AG04450 (cell line): ENCODE measurements at regions of chr10 and their contacts with region 1.

Region 1: GRCh38 chr10:70363971-70364771 is 18.3 kb downstream of the LRRC20 start:
- DNase-seq: peak; percentile 97
- H3K4me3 ChIP-seq: peak overlapping the region; percentile 35
- H3K27ac ChIP-seq: peak overlapping the region; percentile 98
- H3K27me3 ChIP-seq: no peaks in the 10 kb centered on the region
- CTCF ChIP-seq: peak; percentile 94

Region 2: GRCh38 chr10:69968830-69969229 is 395.3 kb before region 1 on chr10:
- CTCF ChIA-PET with region 1: no interaction called
- POLR2A ChIA-PET with region 1: no interaction called
- DNase-seq: no peak
- H3K4me3 ChIP-seq: no peak overlapping the region
- H3K27ac ChIP-seq: no peak overlapping the region
- H3K27me3 ChIP-seq: peaks cover 9% of the 10 kb centered on the region
- CTCF ChIP-seq: peak; percentile 34

Region 3: DNA sequence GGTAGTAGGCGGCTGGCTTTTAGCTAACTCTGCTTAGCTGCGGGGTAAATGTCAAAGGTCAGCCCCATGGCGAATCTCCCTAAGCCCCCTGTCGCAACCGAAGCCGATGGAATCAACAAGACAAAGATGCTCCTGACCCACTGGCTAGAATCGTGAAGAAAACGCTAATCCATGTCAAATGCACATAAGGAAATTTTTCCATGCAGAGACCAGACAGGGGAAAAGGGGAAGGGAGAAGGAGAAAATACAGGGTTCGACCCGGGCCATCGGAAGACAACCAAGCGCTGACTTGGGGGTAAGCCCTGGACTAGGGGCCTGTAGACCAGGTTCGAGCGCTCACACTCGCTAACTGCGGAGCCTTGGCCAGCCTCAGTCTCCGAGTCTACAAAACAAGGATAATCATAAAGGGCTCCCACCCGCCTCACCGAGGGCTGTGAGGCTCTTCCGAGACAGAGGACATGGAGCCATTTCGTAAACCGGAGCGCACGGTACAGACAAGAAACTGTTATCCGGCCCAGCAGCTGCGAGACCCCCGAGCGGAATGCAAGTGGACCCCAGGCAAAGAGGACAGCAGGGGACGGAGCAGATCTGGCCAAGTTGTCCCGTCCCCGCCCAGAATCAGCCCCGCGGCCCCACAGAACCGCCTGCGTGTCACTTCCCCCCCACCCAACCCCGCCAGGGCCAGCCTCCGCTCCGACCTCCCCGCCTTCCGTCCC is 194.4 kb before region 1 on chr10:
- CTCF ChIA-PET with region 1: interaction called, 3 read pairs
- POLR2A ChIA-PET with region 1: interaction called, 13 read pairs
- DNase-seq: no peak
- H3K4me3 ChIP-seq: peak overlapping the region; percentile 99
- H3K27ac ChIP-seq: peak overlapping the region; percentile 85
- H3K27me3 ChIP-seq: no peaks in the 10 kb centered on the region
- CTCF ChIP-seq: no peak

Region 4: GRCh38 chr10:70227548-70228320 is 136.4 kb before region 1 on chr10:
- CTCF ChIA-PET with region 1: interaction called, 300 read pairs
- POLR2A ChIA-PET with region 1: interaction called, 15 read pairs
- DNase-seq: no peak
- H3K4me3 ChIP-seq: no peak overlapping the region
- H3K27ac ChIP-seq: no peak overlapping the region
- H3K27me3 ChIP-seq: no peaks in the 10 kb centered on the region
- CTCF ChIP-seq: no peak

Region 5: DNA sequence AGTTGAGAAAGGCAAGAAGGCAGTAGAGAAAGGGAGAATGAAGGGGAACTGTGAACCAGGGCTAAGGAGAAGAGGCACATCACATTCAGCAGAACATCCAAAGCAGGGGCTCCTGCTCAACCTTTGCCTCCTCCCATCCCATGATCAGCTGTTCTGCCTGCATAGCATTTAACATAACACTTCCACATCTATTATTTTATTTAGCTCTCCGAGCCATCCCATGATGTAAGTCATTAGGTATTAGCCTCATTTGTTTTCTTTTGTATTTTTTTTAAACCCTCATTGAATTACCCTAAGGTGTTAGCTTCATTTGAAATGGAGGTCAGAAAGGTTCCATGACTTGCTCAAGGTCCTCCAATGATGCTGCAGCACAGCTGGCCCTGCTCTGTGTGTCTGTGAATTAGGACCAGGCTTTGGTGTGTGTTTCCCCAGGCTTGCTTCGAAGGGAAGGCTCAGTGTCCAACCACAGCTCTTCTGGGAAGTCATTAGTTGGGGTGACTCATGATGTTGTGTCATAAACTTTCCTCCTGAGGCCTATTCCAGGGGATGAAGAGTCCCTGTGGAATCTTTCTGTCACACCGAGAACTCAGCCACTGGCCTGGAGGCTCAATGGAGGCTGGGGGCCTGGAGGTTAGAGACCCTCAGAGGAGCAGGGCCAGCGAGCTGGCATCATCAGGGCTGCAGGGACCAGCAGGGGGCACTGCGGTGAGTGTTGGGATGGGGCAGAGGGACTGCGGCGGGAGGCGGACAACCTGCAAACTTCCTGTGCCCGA is 96.8 kb before region 1 on chr10:
- CTCF ChIA-PET with region 1: interaction called, 14 read pairs
- POLR2A ChIA-PET with region 1: interaction called, 4 read pairs
- DNase-seq: peak; percentile 95
- H3K4me3 ChIP-seq: no peak overlapping the region
- H3K27ac ChIP-seq: peak overlapping the region; percentile 74
- H3K27me3 ChIP-seq: no peaks in the 10 kb centered on the region
- CTCF ChIP-seq: peak; percentile 34

Region 6: DNA sequence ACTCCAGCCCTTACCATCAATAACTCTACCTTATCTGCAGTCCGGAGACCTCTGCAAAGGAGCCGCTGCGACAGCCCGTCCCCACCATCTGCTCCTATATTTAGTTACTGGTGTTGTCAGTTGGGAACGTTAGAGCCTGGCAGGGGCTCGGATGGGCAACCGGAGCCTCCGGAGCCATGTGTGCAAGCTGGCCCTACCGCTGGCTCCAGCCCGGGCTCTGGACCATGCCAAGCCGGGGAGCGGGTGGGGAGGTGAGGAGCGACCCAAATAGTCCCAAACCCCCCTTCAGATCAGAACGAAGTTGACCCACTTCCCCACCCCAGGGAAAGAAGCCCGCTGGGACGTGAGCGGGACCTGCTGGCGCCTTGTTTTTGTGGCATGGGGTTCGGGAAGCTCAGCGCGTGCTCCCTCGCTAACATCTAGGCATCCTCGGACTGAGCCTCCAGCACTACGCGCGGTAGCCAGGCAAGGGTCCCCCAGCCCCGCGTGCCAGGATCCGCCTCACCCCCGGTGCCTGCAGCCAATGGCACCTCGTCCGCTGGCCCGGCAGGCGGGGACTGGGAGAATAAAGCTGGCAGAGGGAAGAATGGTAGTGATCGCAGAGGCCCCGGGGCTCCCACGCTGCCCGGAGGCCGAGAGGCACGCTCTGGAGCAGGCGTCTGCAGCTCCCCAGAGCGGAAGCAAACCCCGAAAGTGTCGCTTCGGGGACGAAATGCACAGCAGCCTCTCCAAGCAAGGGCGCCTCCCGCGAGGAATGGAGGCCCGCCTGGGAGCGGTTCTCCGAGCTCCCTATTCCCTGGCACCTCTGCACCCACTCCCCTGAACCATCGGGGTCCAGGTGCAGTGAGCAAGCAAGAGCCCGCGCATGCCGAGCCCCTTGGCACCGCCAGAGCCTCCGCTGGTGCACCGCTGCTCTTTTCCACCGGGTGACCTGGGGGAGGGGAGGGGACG is 17.6 kb after region 1 on chr10:
- CTCF ChIA-PET with region 1: interaction called, 16 read pairs
- POLR2A ChIA-PET with region 1: interaction called, 9 read pairs
- DNase-seq: no peak
- H3K4me3 ChIP-seq: peak overlapping the region; percentile 91
- H3K27ac ChIP-seq: peak overlapping the region; percentile 31
- H3K27me3 ChIP-seq: peaks cover 7% of the 10 kb centered on the region
- CTCF ChIP-seq: 0 out of 2 replicates have a peak, but pooled peaks have one; percentile 8